Heart left ventricle (tissue), 16 donors: ENCODE measurements at regions of chr2 and their contacts with region 1.

Region 1: DNA sequence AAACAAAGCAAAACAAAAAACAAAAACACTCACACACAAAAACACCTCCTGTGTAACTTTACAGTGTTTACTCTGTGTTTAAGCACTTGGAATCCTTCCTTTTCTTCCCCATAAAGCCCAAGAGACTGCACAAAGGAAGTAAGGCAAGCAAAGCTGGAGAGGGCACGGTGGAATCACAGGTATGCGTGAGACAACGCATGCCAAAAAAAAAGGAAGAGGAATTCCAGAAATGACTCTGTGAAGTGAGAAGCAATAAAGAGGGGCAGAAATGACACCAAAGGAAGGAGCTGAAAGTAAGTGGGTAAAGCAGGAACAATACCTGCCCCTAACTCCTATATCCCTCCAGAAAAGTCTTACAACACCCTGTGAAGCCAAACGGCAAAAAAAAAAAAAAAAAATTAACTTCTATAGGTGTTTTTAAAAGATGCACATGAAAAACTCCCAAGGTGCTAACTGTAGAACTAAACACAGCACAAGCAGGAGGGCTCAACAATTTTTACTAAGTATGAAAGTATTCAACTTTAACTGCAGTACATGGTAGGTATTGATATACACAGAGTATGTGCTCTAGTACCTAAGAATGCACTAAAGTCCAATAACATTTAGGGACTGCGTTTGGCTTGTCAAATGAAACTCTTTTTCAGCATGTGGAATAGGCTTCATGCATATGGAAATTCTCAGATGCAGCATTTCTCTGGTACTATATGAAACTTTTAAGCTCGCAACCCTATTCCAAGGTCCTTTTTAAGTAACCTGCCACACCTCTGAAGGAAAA is 9.1 kb downstream of the RND3 start:
- DNase-seq: no peak
- ATAC-seq: no peak
- H3K4me3 ChIP-seq: peak overlapping the region in 5 of 12 donors; percentile 1 to 8 (median 2)
- H3K27ac ChIP-seq: peak overlapping the region; percentile 49 to 99 (median 78)
- H3K4me1 ChIP-seq: peaks cover 15 to 100% (median 89%) of the 10 kb centered on the region in 12 donors
- H3K27me3 ChIP-seq: no peaks in the 10 kb centered on the region
- CTCF ChIP-seq: no peak
- POLR2A ChIP-seq: no peak

Region 2: GRCh38 chr2:150280231-150280630 is 198.2 kb before region 1 on chr2:
- intact Hi-C with region 1: loop called in 3 of 10 experiments (anchors 5 to 10 kb)
- DNase-seq: peak in 3 of 5 donors; percentile 27 to 53 (median 42)
- ATAC-seq: peak; percentile 74 to 86 (median 84)
- H3K4me3 ChIP-seq: no peak overlapping the region
- H3K27ac ChIP-seq: peak overlapping the region in 6 of 12 donors; percentile 17 to 74 (median 56)
- H3K4me1 ChIP-seq: peaks cover 0 to 26% (median 4%) of the 10 kb centered on the region in 12 donors
- H3K27me3 ChIP-seq: no peaks in the 10 kb centered on the region
- CTCF ChIP-seq: no peak
- POLR2A ChIP-seq: no peak